ENCODE measurements at regions of chr4 and their contacts with region 1.

Region 1: DNA sequence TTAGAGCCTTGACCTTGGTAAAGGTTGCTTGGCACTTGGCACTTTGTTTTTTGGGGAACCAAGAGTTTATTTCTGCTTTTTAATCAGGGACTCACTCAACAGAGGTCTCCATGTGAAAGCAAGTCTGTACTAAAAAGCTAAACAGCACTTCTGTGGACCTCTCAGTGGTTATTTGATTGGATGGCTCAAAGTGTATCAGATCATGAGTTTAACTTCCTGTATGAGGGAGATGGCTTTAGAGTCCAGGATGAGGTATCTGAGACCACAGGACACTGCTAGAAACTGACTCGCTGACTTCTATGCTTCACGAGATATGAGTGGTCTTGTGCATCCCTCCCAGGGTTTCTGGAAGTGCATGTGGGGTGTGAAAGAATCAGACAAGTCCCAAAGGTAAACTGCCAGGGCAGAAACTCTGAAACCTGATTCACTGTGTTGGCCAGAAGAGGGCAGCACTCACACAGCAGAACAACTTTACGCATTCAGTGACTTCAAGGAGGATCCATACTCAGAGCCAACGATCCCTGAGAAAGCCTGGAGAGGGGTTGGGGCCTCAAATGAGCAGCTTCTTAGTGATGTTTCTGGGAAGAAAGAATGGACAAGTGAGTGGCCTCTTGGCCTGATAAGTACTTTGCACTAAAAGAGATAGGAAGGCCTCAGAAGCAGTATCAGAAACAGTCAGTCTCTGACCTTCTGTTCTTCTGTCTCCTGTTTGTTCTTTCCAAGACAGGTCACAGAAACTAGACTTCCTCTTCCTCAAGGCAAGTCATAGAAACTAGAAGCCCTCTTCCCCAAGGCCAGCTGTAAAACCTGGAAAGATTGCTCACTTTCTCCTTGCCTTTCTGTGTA is 220.3 kb upstream of the CXCL13 start:
- H3K4me3 Mint-ChIP-seq: no peak overlapping the region
- H3K27ac Mint-ChIP-seq: no peak overlapping the region
- H3K4me1 Mint-ChIP-seq: no peaks in the 10 kb centered on the region
- H3K27me3 Mint-ChIP-seq: peaks cover 2% of the 10 kb centered on the region

Region 2: DNA sequence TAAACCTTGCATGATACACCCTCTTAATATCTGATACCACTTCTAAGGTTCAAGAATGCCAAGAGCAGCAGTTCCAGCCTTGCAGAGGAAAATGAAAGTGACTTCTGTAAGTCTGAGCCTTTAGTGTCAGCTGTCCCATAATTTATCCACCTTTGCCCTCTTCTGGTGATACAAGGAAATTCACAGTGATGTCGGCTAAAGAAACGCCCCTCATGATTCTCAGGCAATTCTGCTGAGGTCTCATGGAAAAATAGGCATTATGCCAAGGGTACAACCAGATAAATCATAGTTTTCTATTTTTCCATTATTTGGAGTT is 48.0 kb after region 1 on chr4:
- intact Hi-C with region 1: loop called (anchors 2 kb)
- H3K4me3 Mint-ChIP-seq: no peak overlapping the region
- H3K27ac Mint-ChIP-seq: no peak overlapping the region
- H3K4me1 Mint-ChIP-seq: no peaks in the 10 kb centered on the region
- H3K27me3 Mint-ChIP-seq: no peaks in the 10 kb centered on the region

Region 3: DNA sequence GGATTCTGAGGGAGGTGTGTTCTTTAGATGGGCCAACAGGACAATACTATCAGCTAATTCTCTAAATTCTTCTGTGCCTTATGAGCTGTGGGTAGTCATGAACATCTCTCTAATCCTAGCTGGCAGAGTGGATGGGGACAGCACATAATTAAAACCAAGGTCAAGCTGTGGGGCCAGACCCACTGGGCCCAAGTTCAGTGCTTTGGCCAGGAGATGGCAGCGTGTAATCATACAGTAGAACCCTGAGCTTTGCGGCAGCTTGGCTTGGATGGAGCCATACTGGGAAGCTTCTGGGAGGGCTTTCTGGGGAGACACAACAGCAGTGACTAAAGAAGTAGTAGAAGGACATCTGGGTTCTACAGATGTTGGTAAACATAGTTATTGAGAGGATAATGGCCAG is 79.9 kb after region 1 on chr4:
- intact Hi-C with region 1: no loop called
- H3K4me3 Mint-ChIP-seq: no peak overlapping the region
- H3K27ac Mint-ChIP-seq: no peak overlapping the region
- H3K4me1 Mint-ChIP-seq: no peaks in the 10 kb centered on the region
- H3K27me3 Mint-ChIP-seq: no peaks in the 10 kb centered on the region

Region 4: GRCh38 chr4:77600521-77601451 is 215.4 kb after region 1 on chr4:
- intact Hi-C with region 1: loop called (anchors 1 kb)
- H3K4me3 Mint-ChIP-seq: no peak overlapping the region
- H3K27ac Mint-ChIP-seq: no peak overlapping the region
- H3K4me1 Mint-ChIP-seq: no peaks in the 10 kb centered on the region
- H3K27me3 Mint-ChIP-seq: no peaks in the 10 kb centered on the region

Region 5: DNA sequence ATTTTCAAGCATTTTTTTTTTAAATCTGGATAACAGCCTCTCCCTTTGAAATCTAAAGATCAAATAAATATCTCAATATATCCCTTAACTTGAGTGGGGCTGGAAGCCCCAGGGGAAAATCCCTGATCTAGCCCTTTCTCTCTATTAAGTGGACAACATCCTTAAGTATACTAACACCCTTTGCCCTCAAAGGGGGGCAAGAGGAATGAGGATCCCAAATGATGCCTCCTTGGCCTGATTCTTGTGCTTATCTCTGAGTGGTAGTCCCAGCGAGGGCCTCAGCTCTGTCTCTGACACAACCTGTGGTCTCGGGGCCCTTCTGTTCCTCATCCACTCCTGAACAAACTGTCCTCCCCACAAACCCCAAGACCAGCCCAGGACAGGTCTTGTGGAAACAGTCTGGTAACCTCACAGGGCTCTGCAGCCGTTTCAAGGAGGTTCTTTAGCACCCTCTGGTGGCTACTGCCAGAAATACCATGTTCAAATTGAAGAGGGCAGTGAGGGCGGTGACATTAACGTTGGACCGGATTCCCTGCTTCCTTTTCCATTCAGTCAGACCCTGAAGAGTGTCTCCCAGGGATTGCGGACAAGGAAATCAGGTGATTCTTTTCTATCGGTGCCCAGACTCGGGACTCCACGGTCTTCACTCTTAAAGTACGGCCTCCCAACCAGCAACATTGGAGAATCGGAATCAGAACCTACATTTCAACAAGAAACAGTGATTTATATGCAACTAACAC is 233.2 kb after region 1 on chr4:
- intact Hi-C with region 1: loop called (anchors 1 kb)
- H3K4me3 Mint-ChIP-seq: no peak overlapping the region
- H3K27ac Mint-ChIP-seq: no peak overlapping the region
- H3K4me1 Mint-ChIP-seq: peaks cover 10% of the 10 kb centered on the region
- H3K27me3 Mint-ChIP-seq: peaks cover 5% of the 10 kb centered on the region

Measured in dendritic cell treated with granulocyte-macrophage colony-stimulating factor and Interleukin-4, amounts not matched to agents 40 ng/mL and 50 ng/mL, for 4 days (primary cell).